Aorta (tissue), 5 donors: ENCODE measurements at regions of chr3 and their contacts with region 1.

Region 1: GRCh38 chr3:150603153-150603979 is at the start of gene SELENOT:
- DNase-seq: peak; percentile 96 to 98
- ATAC-seq: peak; percentile 98
- H3K4me3 ChIP-seq: peak within 1 kb of the TSS; percentile 51 to 88
- H3K27ac ChIP-seq: peak within 1 kb of the TSS; percentile 64 to 71
- H3K4me1 ChIP-seq: peaks cover 0 to 1% of the 10 kb centered on the region in 2 donors
- H3K27me3 ChIP-seq: no peaks in the 10 kb centered on the region
- total RNA-seq, gene SELENOT: 73.2 to 93.0 TPM

Region 2: DNA sequence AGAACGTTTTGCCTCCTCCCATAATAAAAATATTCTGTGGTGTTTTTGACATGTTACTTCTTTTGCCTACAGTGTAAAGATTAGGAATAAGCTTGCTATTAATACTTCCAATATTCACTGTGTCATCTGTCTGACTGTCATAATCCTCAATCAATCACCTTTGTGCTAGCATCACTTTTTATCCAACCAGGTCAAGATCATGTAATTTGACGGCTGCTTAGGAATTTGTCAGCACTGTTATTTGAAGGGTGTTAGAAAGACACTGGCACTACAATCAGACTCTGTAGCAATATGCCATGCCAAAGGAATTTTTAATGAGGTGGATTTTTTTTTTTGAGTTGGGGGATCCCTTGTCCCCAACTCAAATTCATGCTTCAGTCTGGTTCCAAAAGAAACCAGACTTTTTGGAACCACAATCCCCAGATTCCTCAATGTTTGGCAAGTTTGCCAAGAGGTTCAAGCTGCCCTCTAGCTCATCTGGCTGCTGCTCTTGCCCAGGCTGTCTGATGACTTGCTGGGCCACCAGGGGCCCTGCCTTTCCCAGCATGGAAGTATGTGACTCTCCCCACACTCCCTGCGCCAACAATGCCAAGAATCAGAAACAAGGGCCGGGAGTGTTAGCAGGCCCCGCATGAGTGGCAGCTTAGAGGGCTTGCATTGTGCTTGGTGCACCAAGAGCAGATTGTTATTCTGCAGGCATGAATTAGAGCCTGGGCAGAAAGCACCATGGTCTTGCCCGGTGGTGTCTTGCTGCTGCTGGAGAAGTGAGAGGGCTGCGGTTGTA is 253.9 kb before region 1 on chr3:
- intact Hi-C with region 1: no loop called
- DNase-seq: peak; percentile 78 to 82
- ATAC-seq: no peak
- H3K4me3 ChIP-seq: no peak overlapping the region
- H3K27ac ChIP-seq: peak overlapping the region; percentile 8 to 37
- H3K4me1 ChIP-seq: peaks cover 3 to 12% of the 10 kb centered on the region in 2 donors
- H3K27me3 ChIP-seq: no peaks in the 10 kb centered on the region

Region 3: DNA sequence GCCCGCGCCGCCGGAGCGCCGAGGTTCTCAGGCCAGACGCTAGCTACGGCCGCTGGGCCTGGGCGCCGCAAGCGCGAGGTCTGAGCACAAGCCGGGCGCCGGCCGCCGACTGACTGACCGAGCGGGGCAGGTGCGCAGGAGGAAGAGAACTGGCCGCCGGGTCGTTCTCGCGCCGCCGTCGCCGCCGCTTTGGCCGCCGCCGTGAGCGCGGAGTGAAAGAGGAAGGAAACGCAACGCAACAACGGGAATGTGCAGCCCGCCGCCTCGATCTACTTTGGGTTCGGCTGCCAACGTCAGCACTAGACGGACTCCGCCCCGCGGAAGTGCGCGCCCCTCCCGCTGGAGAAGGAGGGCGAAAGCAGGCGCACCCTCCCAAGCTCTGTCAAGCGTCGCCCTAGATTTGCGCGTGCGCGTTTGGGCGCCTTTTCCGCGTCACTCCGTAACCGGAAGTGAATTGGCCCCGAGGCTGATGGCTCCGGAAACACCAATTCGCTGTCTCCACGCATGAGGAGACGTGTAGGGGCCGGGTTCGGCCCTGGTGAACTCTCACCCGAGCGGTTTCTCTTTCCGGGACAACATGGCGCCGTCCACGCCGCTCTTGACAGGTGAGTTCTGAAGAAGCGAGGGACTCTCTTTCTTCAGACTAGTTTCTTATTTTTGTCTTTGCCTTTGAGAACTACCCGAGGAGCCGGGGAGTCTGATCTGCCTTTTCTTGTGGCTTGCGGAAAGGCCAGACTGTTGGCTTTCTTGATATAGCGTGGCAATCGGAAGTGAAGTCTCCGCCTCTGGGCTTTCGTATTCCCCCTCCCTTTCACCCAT is 56.9 kb before region 1 on chr3 and contains the starts of genes EIF2A and SERP1:
- intact Hi-C with region 1: loop called in 1 of 2 experiments (anchors 5 kb)
- DNase-seq: peak; percentile 99
- ATAC-seq: peak; percentile 99
- H3K4me3 ChIP-seq: peak within 1 kb of the TSS; percentile 90 to 95
- H3K27ac ChIP-seq: peak within 1 kb of the TSS; percentile 61 to 89
- H3K4me1 ChIP-seq: peaks cover 0 to 6% of the 10 kb centered on the region in 2 donors
- H3K27me3 ChIP-seq: no peaks in the 10 kb centered on the region
- total RNA-seq, gene EIF2A: 72.8 to 82.7 TPM
- total RNA-seq, gene SERP1: 74.4 to 78.8 TPM

Region 4: GRCh38 chr3:150703299-150704134 is 100.2 kb after region 1 on chr3 and contains the start of gene ERICH6:
- intact Hi-C with region 1: loop called in 1 of 2 experiments (anchors 10 kb)
- DNase-seq: peak; percentile 96 to 97
- ATAC-seq: peak; percentile 98
- H3K4me3 ChIP-seq: peak within 1 kb of the TSS; percentile 23 to 86
- H3K27ac ChIP-seq: peak within 1 kb of the TSS in 1 of 2 donors; percentile 62
- H3K4me1 ChIP-seq: no peaks in the 10 kb centered on the region
- H3K27me3 ChIP-seq: no peaks in the 10 kb centered on the region
- total RNA-seq, gene ERICH6: 0.18 TPM in 1 of 2 donors, not detected in the other